WTC11 (cell line): ENCODE measurements at regions of chr19 and their contacts with region 1.

Region 1: DNA sequence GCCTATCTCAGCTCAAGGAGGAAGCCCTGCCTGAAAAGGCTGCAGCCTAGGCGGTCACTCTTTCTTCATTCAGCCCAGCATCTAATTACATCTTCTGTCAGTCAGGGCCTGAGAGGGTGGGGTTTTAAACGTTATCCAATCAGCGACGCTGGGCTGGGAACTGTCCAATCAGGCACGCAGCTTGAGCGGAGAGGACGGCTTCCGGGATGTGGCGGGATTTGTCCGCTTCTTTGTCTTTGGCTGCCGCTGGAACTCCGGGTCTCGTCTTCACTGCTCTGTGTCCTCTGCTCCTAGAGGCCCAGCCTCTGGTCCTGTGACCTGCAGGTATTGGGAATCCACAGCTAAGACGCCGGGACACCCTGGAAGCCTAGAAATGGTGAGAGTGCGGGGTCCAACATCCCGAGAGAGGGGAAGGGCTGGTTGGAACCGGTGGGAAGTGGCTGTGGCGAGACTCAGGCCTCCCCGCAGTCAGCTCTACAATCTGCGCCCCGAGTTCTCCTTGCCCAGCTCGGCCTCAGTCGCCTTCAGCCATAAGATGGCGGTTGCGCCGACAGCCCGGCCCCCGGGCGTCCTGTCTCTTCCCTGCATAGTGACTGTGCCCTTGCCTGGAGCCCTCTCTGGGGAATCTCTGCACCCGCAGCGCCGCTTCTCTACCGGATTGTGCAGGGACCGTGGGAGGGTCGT is at the start of gene ZNF738:
- DNase-seq: peak; percentile 94
- ATAC-seq: peak; percentile 98
- H3K4me3 Mint-ChIP-seq: peak within 1 kb of the TSS; percentile 100
- H3K27ac Mint-ChIP-seq: peak within 1 kb of the TSS; percentile 100
- H3K4me1 Mint-ChIP-seq: peaks cover 14% of the 10 kb centered on the region
- H3K27me3 Mint-ChIP-seq: no peaks in the 10 kb centered on the region
- CTCF ChIP-seq: no peak
- total RNA-seq, gene ZNF738: 48.4 to 52.0 TPM (median 49.7 TPM) in 3 replicates

Region 2: GRCh38 chr19:21328885-21329605 is 29.9 kb before region 1 on chr19 and contains the start of gene ZNF708:
- CTCF ChIA-PET with region 1: no interaction called
- POLR2A ChIA-PET with region 1: interaction called, 46 read pairs
- DNase-seq: peak; percentile 84
- ATAC-seq: peak; percentile 100
- H3K4me3 Mint-ChIP-seq: peak within 1 kb of the TSS; percentile 100
- H3K27ac Mint-ChIP-seq: peak within 1 kb of the TSS; percentile 100
- H3K4me1 Mint-ChIP-seq: peaks cover 27% of the 10 kb centered on the region
- H3K27me3 Mint-ChIP-seq: 0 out of 2 replicates have a peak, but pooled peaks cover 3% of the 10 kb centered on the region
- CTCF ChIP-seq: no peak
- total RNA-seq, gene ZNF708: 27.2 to 34.9 TPM (median 30.1 TPM) in 3 replicates

Region 3: DNA sequence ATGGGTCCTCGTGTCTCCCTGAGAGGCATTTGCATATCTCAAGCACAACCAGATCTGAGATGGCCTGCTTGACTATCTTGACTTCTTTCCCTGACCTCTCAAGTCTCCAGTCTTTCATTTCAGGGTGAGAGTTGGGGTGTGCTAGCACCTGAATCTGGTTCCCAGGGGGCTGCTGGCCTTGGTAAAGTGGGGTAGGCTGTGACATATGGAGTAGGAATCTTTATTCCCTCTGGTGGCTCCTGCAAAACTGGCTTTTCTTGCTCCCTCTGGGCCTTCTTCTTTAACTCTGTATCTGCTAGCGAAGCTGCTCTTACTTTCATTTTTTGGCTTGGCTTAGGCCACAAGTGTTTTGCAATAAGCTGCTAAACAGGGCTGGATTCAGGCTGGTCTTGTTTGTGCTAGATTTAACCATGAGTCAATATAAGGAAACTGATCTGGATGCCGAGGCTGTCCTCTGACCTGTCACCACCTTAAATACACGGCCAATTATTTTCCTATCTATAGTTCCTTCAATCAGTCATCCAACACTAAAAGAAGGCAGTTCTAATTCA is 80.4 kb after region 1 on chr19:
- CTCF ChIA-PET with region 1: no interaction called
- POLR2A ChIA-PET with region 1: no interaction called
- DNase-seq: no peak
- ATAC-seq: no peak
- H3K4me3 Mint-ChIP-seq: no peak overlapping the region
- H3K27ac Mint-ChIP-seq: no peak overlapping the region
- H3K4me1 Mint-ChIP-seq: peaks cover 29% of the 10 kb centered on the region
- H3K27me3 Mint-ChIP-seq: no peaks in the 10 kb centered on the region
- CTCF ChIP-seq: no peak

Region 4: GRCh38 chr19:21492947-21493906 is 134.3 kb after region 1 on chr19:
- CTCF ChIA-PET with region 1: no interaction called
- POLR2A ChIA-PET with region 1: no interaction called
- DNase-seq: no peak
- ATAC-seq: no peak
- H3K4me3 Mint-ChIP-seq: no peak overlapping the region
- H3K27ac Mint-ChIP-seq: no peak overlapping the region
- H3K4me1 Mint-ChIP-seq: no peaks in the 10 kb centered on the region
- H3K27me3 Mint-ChIP-seq: no peaks in the 10 kb centered on the region; the same call in 1 of the 2 replicates
- CTCF ChIP-seq: no peak